ENCODE measurements at regions of chr14 and their contacts with region 1.

Region 1: DNA sequence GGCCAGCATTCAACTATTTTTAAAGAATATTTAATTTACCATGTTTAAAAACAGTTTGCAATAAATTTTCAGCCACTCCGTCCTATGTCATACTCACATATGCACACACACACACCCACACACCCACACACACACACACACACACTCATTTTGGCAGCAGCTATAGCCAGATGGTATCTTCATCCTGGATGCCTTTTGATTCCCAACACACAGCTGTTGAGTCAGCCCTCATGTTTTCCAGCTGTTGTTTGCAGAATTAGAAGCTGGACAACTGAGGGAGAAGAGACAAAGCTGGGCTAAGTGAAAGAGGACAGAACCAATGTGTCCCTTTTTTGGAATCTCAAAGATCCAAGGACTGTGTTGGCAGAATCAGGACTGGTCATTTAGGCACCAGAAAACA is 80.0 kb upstream of the EGLN3 start:
- DNase-seq: no peak
- ATAC-seq: no peak
- H3K4me3 ChIP-seq: no peak overlapping the region
- H3K27ac ChIP-seq: no peak overlapping the region
- H3K4me1 ChIP-seq: peaks cover 0 to 23% of the 10 kb centered on the region in 2 experiments; a peak in 3 of 5 replicates
- H3K27me3 ChIP-seq: no peaks in the 10 kb centered on the region; a peak in 1 of 5 replicates
- CTCF ChIP-seq: no peak
- EP300 ChIP-seq: no peak
- POLR2A ChIP-seq: no peak
- RAD21 ChIP-seq: no peak

Region 2: GRCh38 chr14:33959692-33960151 is 71.1 kb before region 1 on chr14:
- CTCF ChIA-PET with region 1: no interaction called
- POLR2A ChIA-PET with region 1: no interaction called
- in situ Hi-C with region 1: no loop called
- intact Hi-C with region 1: loop called (anchors 5 kb)
- DNase-seq: no peak
- ATAC-seq: no peak
- H3K4me3 ChIP-seq: no peak overlapping the region
- H3K27ac ChIP-seq: no peak overlapping the region
- H3K4me1 ChIP-seq: peaks cover 2 to 18% of the 10 kb centered on the region in 2 experiments; a peak in 4 of 5 replicates
- H3K27me3 ChIP-seq: no peaks in the 10 kb centered on the region
- CTCF ChIP-seq: no peak
- EP300 ChIP-seq: no peak
- POLR2A ChIP-seq: no peak
- RAD21 ChIP-seq: no peak

Measured in K562 (cell line).